Prostate gland (tissue), 2 donors: ENCODE measurements at regions of chr6 and their contacts with region 1.

Region 1: GRCh38 chr6:36033935-36034334 is 6.3 kb downstream of the MAPK14 start:
- DNase-seq: no peak
- H3K4me3 ChIP-seq: no peak overlapping the region
- H3K27ac ChIP-seq: no peak overlapping the region
- H3K4me1 ChIP-seq: no peaks in the 10 kb centered on the region
- H3K27me3 ChIP-seq: no peaks in the 10 kb centered on the region
- CTCF ChIP-seq: no peak
- POLR2A ChIP-seq: no peak

Region 2: GRCh38 chr6:36067374-36068011 is 33.6 kb after region 1 on chr6:
- intact Hi-C with region 1: loop called (anchors 5 kb)
- DNase-seq: no peak
- H3K4me3 ChIP-seq: no peak overlapping the region
- H3K27ac ChIP-seq: no peak overlapping the region
- H3K4me1 ChIP-seq: peaks cover 2% of the 10 kb centered on the region
- H3K27me3 ChIP-seq: no peaks in the 10 kb centered on the region
- CTCF ChIP-seq: no peak
- POLR2A ChIP-seq: no peak